Heart right ventricle (tissue), 16 donors: ENCODE measurements at regions of chr4 and their contacts with region 1.

Region 1: DNA sequence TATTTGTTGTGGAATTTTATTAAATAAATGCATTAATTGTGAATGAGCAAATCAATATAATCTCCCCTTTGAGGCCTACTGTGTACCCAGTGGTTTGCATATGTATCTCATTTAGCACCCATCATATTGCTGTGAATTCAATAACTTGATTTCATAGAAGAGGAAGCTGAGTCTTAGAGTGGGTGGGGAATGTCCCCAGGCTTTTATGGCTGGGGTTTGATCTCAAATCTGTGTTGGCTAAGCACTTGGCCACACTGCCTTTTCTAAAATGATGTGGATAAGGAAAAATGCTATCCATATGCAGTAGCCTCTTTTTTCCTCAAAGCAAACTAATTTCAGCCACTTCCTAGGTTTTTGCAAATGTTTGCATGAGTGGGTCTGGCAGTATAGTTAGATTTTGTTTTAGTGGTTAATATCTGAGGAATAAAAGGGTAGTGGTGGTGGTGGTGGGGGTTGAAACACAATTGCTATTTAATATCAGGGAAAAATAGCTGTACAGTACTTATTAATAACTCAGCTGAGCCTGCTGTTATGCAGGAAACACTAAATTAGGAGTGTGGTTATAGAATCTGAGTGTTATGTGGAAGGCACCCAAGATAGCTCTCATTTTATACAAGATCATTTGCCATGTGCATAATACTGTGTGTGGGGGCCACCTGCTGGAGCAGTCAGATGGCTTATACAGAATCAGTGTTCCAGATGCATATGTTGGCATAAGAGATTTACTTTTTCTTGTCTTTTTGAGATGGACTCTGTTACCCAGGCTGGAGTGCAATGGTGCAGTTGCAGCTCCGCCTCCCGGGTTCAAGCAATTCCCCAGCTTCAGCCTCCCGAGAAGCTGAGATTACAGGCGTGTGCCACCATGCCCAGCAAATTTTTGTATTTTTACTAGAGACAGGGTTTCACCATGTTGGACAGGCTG is 108.0 kb downstream of the TMEM131L start:
- DNase-seq: peak; percentile 54 to 68
- ATAC-seq: peak; percentile 81 to 91 (median 89)
- H3K4me3 ChIP-seq: no peak overlapping the region
- H3K27ac ChIP-seq: peak overlapping the region in 9 of 10 donors; percentile 36 to 79 (median 74)
- H3K4me1 ChIP-seq: peaks cover under 1 to 61% (median 38%) of the 10 kb centered on the region in 9 donors
- H3K27me3 ChIP-seq: no peaks in the 10 kb centered on the region
- CTCF ChIP-seq: peak; percentile 38 to 81 (median 70)

Region 2: DNA sequence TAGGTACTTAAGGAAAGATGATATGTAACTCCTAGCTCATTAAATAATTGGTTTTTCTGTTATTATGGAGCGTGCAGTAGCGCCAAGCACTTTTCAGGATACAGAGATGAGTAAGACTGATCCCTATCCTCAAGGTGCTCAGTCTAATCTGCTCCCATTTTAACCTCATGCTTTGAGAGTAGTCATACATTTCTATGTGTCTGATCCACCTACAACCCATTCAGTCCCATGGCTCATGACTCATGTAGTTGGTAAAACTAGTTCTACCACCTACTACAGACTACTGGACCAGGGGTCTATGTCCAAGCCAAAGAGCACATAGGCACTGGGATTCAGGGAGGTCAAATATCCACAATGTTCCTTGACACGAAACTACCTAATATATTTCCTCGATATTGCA is 955.2 kb before region 1 on chr4:
- intact Hi-C with region 1: no loop called
- DNase-seq: no peak
- ATAC-seq: no peak
- H3K4me3 ChIP-seq: no peak overlapping the region
- H3K27ac ChIP-seq: no peak overlapping the region
- H3K4me1 ChIP-seq: no peaks in the 10 kb centered on the region
- H3K27me3 ChIP-seq: peaks cover 0 to 25% (median 7%) of the 10 kb centered on the region in 7 donors
- CTCF ChIP-seq: no peak

Region 3: DNA sequence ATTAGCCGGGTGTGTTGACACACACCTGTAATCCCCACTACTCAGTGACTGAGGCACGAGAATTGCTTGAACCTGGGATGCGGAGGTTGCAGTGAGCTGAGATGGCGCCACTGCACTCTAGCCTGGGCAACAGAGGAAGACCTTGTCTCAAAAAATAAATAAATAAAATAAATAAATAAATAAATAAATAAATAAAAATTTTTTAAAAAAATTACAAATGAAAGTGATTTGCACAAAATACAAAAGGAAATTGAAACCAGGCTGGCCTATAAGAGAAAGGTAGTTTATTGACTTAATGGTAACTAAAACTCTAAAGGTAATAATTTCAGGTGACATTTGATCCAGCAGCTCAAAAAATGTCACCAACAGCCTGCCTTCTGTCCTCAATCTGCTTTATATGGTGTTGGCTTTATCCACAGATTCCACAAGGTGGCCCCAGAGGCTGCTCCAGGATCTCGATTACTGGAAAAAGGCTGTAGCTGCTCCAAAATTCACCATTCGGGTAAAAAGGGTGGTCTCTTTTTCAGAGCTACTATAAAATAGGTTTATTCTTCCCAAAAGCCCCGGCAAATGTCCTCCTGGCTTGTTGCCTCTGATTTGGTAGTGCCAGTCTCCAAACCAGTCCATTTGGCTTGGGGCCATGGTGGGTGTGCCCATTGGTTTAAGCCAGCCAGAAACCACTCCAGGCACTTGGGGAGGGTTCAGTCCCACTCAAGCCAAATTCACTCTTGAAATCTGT is 431.3 kb before region 1 on chr4:
- intact Hi-C with region 1: loop called in 8 of 10 experiments (anchors 5 to 10 kb)
- DNase-seq: peak; percentile 62 to 72
- ATAC-seq: peak; percentile 75 to 92 (median 78)
- H3K4me3 ChIP-seq: peak overlapping the region in 3 of 10 donors; percentile 21 to 31 (median 22)
- H3K27ac ChIP-seq: no peak overlapping the region
- H3K4me1 ChIP-seq: peaks cover 0 to 15% (median 9%) of the 10 kb centered on the region in 9 donors
- H3K27me3 ChIP-seq: peaks cover 0 to 6% (median 0%) of the 10 kb centered on the region in 7 donors
- CTCF ChIP-seq: peak; percentile 69 to 94 (median 84)

Region 4: GRCh38 chr4:153432968-153433753 is 141.0 kb before region 1 on chr4:
- intact Hi-C with region 1: loop called in 9 of 10 experiments (anchors 1 to 10 kb)
- DNase-seq: peak; percentile 18 to 55
- ATAC-seq: peak; percentile 65 to 93 (median 85)
- H3K4me3 ChIP-seq: peak overlapping the region in 1 of 10 donors; percentile 33
- H3K27ac ChIP-seq: peak overlapping the region in 1 of 10 donors; percentile 48
- H3K4me1 ChIP-seq: peaks cover 0 to 17% (median 0%) of the 10 kb centered on the region in 9 donors
- H3K27me3 ChIP-seq: no peaks in the 10 kb centered on the region
- CTCF ChIP-seq: peak; percentile 31 to 79 (median 71)

Region 5: GRCh38 chr4:153466081-153466948 is 107.8 kb before region 1 on chr4 and contains the start of gene TMEM131L:
- intact Hi-C with region 1: loop called (anchors 1 to 10 kb)
- DNase-seq: peak; percentile 60 to 77
- ATAC-seq: peak; percentile 77 to 93 (median 89)
- H3K4me3 ChIP-seq: peak within 1 kb of the TSS; percentile 61 to 98 (median 91)
- H3K27ac ChIP-seq: peak within 1 kb of the TSS; percentile 71 to 93 (median 85)
- H3K4me1 ChIP-seq: peaks cover 3 to 63% (median 48%) of the 10 kb centered on the region in 9 donors
- H3K27me3 ChIP-seq: no peaks in the 10 kb centered on the region
- CTCF ChIP-seq: peak in 5 of 9 donors; percentile 11 to 46 (median 41)
- total RNA-seq, gene TMEM131L: 9.1 to 33.6 (median 20.0) TPM

Region 6: DNA sequence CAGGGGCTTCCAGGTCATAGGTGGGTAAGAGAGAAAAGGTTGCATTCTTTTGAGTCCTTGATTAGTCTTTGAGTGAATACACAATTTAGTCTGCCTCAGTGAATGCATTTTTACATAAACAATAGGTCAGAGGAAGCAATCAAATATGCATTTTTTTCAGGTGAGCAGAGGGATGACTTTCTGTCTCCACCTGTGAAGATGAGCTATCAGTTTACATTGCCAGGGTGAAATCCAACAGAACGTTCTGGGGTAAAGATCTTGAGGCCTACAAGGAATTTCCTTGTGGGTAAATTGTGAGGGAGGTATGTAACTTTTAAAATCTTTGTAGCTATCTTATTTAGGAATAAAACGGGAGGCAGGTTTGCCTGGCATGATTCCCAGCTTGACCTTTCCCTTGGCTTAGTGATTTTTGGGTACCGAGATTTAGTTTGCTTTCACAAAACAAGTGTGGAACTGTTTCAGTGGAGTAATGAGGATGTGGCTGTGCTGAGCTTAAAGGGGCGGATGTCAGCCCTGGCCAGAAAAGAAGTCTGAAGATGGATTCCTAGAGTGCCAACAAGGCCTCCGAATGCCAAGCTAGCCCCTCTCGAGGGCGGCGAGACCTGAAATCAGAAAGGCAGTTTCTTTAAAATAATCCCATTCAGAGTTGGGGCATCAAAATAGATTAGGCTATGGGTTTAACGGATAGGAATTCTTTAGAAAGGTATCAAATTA is 78.5 kb before region 1 on chr4:
- intact Hi-C with region 1: no loop called
- DNase-seq: no peak
- ATAC-seq: no peak
- H3K4me3 ChIP-seq: no peak overlapping the region
- H3K27ac ChIP-seq: peak overlapping the region in 1 of 10 donors; percentile 61
- H3K4me1 ChIP-seq: peaks cover 0 to 67% (median 38%) of the 10 kb centered on the region in 9 donors
- H3K27me3 ChIP-seq: no peaks in the 10 kb centered on the region
- CTCF ChIP-seq: no peak